SK-N-SH (cell line): ENCODE measurements at regions of chr11 and their contacts with region 1.

Region 1: GRCh38 chr11:113137713-113138529 is 176.5 kb upstream of the TTC12 start:
- DNase-seq: peak; percentile 56
- H3K4me3 ChIP-seq: no peak overlapping the region
- H3K27ac ChIP-seq: peak overlapping the region in 1 of 2 experiments; percentile 95; a peak in 2 of 4 replicates
- H3K4me1 ChIP-seq: peaks cover 0 to 51% of the 10 kb centered on the region in 2 experiments; a peak in 2 of 4 replicates
- H3K27me3 ChIP-seq: no peaks in the 10 kb centered on the region
- CTCF ChIP-seq: no peak
- EP300 ChIP-seq: peak in 1 of 2 experiments; percentile 87; a peak in 2 of 4 replicates
- RAD21 ChIP-seq: peak; percentile 38

Region 2: DNA sequence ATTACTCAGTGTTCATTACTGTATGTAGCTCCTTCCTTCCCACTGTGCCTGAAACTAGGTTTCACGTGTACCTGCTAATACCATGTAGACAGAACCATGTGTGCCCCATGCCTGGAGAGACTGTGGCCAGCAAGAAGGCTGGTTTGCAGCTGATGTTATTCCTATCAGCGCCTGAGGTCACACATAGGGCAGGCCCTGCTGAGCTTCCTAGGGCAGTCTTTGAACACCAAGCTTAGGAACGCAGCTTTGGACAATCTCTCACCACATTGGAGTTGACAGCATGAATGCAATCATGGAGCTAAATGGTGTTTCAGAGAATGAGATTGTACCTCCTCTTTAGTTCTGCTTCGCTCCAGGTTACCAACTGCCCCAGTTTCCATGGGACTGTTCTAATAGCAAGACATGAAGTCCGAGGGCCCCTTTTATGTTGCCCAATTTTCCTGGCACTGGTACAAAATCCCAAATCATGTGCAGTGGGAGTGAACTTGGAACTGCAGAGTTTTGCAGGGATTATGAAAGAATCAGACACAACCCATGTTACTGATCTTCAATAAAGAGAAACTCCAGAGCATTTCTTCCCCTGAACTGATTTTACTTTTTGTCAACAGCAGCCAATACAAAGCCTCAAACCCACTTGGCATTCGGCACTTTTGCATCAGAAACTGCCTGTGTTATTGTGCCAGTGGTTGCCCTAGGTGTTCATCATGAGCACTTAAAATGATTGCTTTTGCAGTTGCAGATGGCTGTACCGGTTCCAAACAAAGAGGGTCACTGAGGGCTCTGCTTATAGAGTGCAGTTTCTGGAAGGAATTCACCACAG is 22.3 kb after region 1 on chr11:
- CTCF ChIA-PET with region 1: interaction called, 13 read pairs
- POLR2A ChIA-PET with region 1: no interaction called
- DNase-seq: no peak
- H3K4me3 ChIP-seq: no peak overlapping the region
- H3K27ac ChIP-seq: peak overlapping the region in 1 of 2 experiments; percentile 89; a peak in 2 of 4 replicates
- H3K4me1 ChIP-seq: peaks cover 0 to 47% of the 10 kb centered on the region in 2 experiments; a peak in 2 of 4 replicates
- H3K27me3 ChIP-seq: no peaks in the 10 kb centered on the region
- CTCF ChIP-seq: no peak
- EP300 ChIP-seq: peak in 1 of 2 experiments; percentile 67; a peak in 1 of 4 replicates
- RAD21 ChIP-seq: no peak

Region 3: DNA sequence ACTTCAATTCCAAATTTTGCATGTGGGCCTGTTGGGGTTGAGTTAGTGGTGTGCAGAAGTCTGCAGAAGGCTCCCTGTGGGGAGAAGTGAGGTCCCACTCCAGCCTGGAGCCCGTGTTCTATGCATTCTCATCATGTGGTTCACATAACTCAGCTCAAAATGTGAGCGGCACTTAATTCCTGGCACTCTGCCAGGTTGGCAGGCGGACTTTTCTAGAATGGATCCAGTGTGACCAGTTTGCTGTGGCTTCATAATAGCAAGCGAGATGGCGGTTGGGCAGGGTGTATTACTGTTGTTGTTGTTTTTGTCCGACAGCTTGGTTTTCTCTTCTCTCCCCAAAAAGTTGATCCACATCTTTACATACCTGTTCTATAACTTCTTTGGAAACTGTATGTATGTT is 29.7 kb after region 1 on chr11:
- CTCF ChIA-PET with region 1: interaction called, 12 read pairs
- POLR2A ChIA-PET with region 1: interaction called, 3 read pairs
- DNase-seq: no peak
- H3K4me3 ChIP-seq: no peak overlapping the region
- H3K27ac ChIP-seq: peak overlapping the region in 1 of 2 experiments; percentile 89; a peak in 2 of 4 replicates
- H3K4me1 ChIP-seq: peaks cover 0 to 36% of the 10 kb centered on the region in 2 experiments; a peak in 2 of 4 replicates
- H3K27me3 ChIP-seq: no peaks in the 10 kb centered on the region
- CTCF ChIP-seq: no peak
- EP300 ChIP-seq: no peak
- RAD21 ChIP-seq: no peak

Region 4: GRCh38 chr11:113174882-113175281 is 37.0 kb after region 1 on chr11:
- CTCF ChIA-PET with region 1: interaction called, 11 read pairs
- POLR2A ChIA-PET with region 1: interaction called, 3 read pairs
- DNase-seq: no peak
- H3K4me3 ChIP-seq: no peak overlapping the region
- H3K27ac ChIP-seq: peak overlapping the region in 1 of 2 experiments; percentile 16; a peak in 1 of 4 replicates
- H3K4me1 ChIP-seq: peaks cover 4 to 46% of the 10 kb centered on the region in 2 experiments; a peak in 2 of 4 replicates
- H3K27me3 ChIP-seq: no peaks in the 10 kb centered on the region
- CTCF ChIP-seq: no peak
- EP300 ChIP-seq: no peak
- RAD21 ChIP-seq: no peak

Region 5: DNA sequence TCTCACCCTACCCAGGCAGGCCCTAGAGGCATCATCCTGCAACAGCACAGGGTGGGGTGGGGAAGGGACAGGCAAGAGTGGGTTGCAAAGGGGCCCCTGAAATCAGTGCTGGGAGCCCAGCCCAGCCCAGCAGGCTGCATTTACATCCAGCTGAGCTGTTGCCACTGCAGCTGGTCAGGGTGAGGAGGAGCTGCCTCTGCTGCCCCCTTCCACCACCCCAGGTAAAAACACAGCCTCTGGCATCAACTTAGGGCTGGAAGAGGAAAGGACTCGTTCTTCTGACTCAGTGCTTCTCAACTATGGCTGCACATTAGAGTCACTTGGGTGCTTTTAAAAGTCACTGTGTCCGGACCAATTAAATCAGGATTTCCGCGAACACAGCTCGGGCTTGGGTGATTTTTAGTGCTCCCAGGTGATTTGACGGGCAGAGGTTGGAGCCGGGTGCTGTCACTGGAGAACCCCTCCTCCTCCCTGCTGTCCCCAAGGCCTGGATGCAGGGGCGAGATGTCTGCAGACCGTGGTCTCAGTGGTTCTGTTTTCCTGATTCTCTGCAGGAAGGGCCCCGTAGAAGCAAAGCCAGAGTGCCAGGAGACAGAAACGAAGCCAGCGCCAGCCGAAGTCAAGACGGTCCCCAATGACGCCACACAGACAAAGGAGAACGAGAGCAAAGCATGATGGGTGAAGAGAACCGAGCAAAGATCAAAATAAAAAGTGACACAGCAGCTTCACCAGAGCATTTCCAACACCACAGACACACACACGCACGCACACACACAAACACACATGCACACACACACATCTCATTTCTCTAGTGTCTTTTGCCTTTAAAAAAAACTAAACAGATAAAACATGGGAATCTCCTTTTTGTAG is 137.0 kb after region 1 on chr11:
- CTCF ChIA-PET with region 1: interaction called, 17 read pairs
- POLR2A ChIA-PET with region 1: no interaction called
- DNase-seq: peak; percentile 44
- H3K4me3 ChIP-seq: no peak overlapping the region
- H3K27ac ChIP-seq: peak overlapping the region in 1 of 2 experiments; percentile 89; a peak in 2 of 4 replicates
- H3K4me1 ChIP-seq: peaks cover 0 to 29% of the 10 kb centered on the region in 2 experiments; a peak in 1 of 4 replicates
- H3K27me3 ChIP-seq: no peaks in the 10 kb centered on the region
- CTCF ChIP-seq: peak; percentile 12; the same call in 1 of the 2 replicates
- EP300 ChIP-seq: no peak
- RAD21 ChIP-seq: peak; percentile 47